Naive thymus-derived CD4-positive, alpha-beta T cell (primary cell): ENCODE measurements at regions of chr5 and their contacts with region 1.

Region 1: GRCh38 chr5:111447822-111448221 is 64.5 kb downstream of the STARD4 start:
- DNase-seq: no peak
- ATAC-seq: no peak
- H3K4me3 ChIP-seq: no peak overlapping the region
- H3K4me3 Mint-ChIP-seq: peak overlapping the region in 3 of 10 donors; percentile 21 to 44 (median 39)
- H3K27ac ChIP-seq: no peak overlapping the region
- H3K27ac Mint-ChIP-seq: peak overlapping the region in 6 of 9 donors; percentile 0 to 72 (median 62)
- H3K4me1 ChIP-seq: peaks cover 0 to 4% of the 10 kb centered on the region in 2 donors
- H3K4me1 Mint-ChIP-seq: peaks cover 4 to 61% (median 49%) of the 10 kb centered on the region in 7 donors
- H3K27me3 ChIP-seq: no peaks in the 10 kb centered on the region
- H3K27me3 Mint-ChIP-seq: no peaks in the 10 kb centered on the region

Region 2: DNA sequence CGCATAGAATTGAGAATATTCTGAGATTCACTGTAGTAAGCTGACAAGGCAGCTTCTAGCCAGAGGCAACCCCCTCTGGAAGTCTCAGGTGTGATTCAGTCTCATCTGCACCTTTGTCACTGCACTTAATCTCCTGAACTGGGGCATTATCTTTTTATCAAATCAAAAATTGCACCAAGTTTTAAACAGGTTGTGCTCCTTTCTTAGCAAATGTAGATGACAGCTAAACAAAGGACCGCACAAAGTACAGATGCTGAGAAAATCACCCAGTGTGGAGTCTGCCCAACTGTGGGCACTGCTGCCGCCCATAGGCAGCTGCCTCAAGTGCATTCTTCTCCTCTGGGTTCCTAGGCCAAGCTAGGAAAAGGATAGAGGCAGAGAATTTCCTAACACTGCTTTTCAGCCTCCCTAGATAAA is 13.4 kb after region 1 on chr5:
- CTCF ChIA-PET with region 1: no interaction called
- POLR2A ChIA-PET with region 1: no interaction called
- intact Hi-C with region 1: loop called in 1 of 2 experiments (anchors 2 kb)
- DNase-seq: no peak
- ATAC-seq: no peak
- H3K4me3 ChIP-seq: no peak overlapping the region
- H3K4me3 Mint-ChIP-seq: no peak overlapping the region
- H3K27ac ChIP-seq: no peak overlapping the region
- H3K27ac Mint-ChIP-seq: peak overlapping the region in 3 of 9 donors; percentile 34 to 60 (median 58)
- H3K4me1 ChIP-seq: no peaks in the 10 kb centered on the region
- H3K4me1 Mint-ChIP-seq: peaks cover 5 to 52% (median 28%) of the 10 kb centered on the region in 7 donors
- H3K27me3 ChIP-seq: no peaks in the 10 kb centered on the region
- H3K27me3 Mint-ChIP-seq: no peaks in the 10 kb centered on the region

Region 3: DNA sequence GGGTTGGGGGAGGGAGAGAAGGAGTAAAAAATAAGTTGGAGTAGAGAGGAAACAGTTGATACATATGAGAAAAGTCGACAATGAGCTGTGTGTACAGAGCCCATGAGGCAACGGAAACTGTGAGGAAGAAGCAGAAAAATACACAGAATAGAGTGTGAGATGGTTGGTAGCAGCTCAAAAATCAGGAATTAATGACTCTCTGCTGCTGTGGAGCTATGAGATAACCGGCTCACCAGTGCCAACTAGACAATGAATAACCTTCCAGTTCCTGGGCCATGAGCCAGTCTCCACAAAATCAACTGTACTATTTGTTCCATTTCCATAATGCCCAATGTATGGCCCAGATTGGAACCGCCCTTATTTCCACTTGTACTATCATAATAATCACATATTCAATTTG is 362.3 kb after region 1 on chr5:
- CTCF ChIA-PET with region 1: no interaction called
- POLR2A ChIA-PET with region 1: no interaction called
- intact Hi-C with region 1: no loop called
- DNase-seq: no peak
- ATAC-seq: no peak
- H3K4me3 ChIP-seq: no peak overlapping the region
- H3K4me3 Mint-ChIP-seq: no peak overlapping the region
- H3K27ac ChIP-seq: no peak overlapping the region
- H3K27ac Mint-ChIP-seq: no peak overlapping the region
- H3K4me1 ChIP-seq: no peaks in the 10 kb centered on the region
- H3K4me1 Mint-ChIP-seq: peaks cover 0 to 1% (median 0%) of the 10 kb centered on the region in 7 donors
- H3K27me3 ChIP-seq: no peaks in the 10 kb centered on the region
- H3K27me3 Mint-ChIP-seq: peaks cover 5 to 17% (median 6%) of the 10 kb centered on the region in 5 donors